Dorsolateral prefrontal cortex (tissue), 120 donors: ENCODE measurements at regions of chr1 and their contacts with region 1.

Region 1: GRCh38 chr1:24744911-24745710 is at the start of gene CLIC4:
- DNase-seq: peak; percentile 64 to 99 (median 98)
- H3K4me3 ChIP-seq: peak within 1 kb of the TSS; percentile 37 to 96 (median 80)
- H3K27ac ChIP-seq: peak within 1 kb of the TSS; percentile 33 to 99 (median 93)
- H3K27me3 ChIP-seq: peaks cover 0 to 33% (median 0%) of the 10 kb centered on the region in 45 donors
- CTCF ChIP-seq: peak; percentile 27 to 81 (median 66)
- total RNA-seq, gene CLIC4: 39.8 to 251 (median 85.5) TPM

Region 2: GRCh38 chr1:24688621-24689195 is 56.4 kb before region 1 on chr1:
- intact Hi-C with region 1: loop called (anchors 2 kb)
- DNase-seq: peak; percentile 13 to 83 (median 74)
- H3K4me3 ChIP-seq: peak overlapping the region in 1 of 59 donors; percentile 4
- H3K27ac ChIP-seq: peak overlapping the region in 34 of 59 donors; percentile 4 to 80 (median 50)
- H3K27me3 ChIP-seq: no peaks in the 10 kb centered on the region
- CTCF ChIP-seq: peak; percentile 55 to 98 (median 88)

Region 3: DNA sequence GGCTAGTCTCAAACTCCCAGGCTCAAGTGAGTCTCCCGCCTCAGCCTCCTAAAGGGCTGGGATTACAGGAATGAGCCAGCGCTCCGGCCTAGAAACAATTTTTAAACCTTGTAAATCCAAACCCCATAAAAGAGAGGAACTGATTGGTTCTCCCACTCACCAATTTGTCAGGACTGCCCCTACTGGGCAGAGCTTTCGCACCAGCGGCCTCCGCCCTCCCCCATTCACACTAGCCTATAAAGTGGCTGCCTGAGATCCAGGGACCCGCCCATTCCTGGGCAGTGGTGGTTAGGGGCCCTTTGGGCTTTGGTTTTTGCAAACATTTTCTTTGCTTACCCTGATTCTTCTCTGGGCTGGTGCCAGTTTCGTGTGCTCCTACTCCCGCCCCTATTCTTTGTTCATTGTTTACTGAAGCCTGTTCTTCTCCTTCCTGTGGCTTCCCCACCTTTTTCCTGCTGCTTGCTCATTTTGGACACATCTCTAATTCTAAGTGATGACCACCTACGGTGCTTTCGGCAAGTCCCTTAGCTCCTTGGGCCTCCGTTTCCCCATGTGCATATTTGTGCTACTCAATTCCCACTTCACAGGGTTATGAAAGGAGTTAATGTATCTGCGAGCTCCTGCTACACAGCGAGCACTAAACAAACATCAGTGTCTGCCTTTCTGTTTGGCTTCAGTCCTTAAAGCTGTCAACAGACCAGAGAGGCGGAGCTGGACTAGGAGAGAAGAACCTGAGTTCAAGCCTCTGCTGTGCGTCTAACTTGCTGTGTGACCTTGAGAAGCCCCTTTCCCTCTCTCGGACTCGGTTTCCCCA is 39.6 kb before region 1 on chr1:
- intact Hi-C with region 1: loop called (anchors 1 kb)
- DNase-seq: peak; percentile 11 to 91 (median 86)
- H3K4me3 ChIP-seq: peak overlapping the region in 53 of 59 donors; percentile 7 to 61 (median 32)
- H3K27ac ChIP-seq: peak overlapping the region; percentile 67 to 98 (median 93)
- H3K27me3 ChIP-seq: no peaks in the 10 kb centered on the region
- CTCF ChIP-seq: peak in 39 of 56 donors; percentile 10 to 52 (median 36)

Region 4: GRCh38 chr1:24714859-24715520 is 30.1 kb before region 1 on chr1:
- intact Hi-C with region 1: loop called (anchors 1 to 2 kb)
- DNase-seq: peak; percentile 20 to 92 (median 88)
- H3K4me3 ChIP-seq: peak overlapping the region in 15 of 59 donors; percentile 9 to 44 (median 23)
- H3K27ac ChIP-seq: peak overlapping the region; percentile 58 to 98 (median 93)
- H3K27me3 ChIP-seq: no peaks in the 10 kb centered on the region
- CTCF ChIP-seq: peak in 13 of 56 donors; percentile 4 to 38 (median 14)

Region 5: DNA sequence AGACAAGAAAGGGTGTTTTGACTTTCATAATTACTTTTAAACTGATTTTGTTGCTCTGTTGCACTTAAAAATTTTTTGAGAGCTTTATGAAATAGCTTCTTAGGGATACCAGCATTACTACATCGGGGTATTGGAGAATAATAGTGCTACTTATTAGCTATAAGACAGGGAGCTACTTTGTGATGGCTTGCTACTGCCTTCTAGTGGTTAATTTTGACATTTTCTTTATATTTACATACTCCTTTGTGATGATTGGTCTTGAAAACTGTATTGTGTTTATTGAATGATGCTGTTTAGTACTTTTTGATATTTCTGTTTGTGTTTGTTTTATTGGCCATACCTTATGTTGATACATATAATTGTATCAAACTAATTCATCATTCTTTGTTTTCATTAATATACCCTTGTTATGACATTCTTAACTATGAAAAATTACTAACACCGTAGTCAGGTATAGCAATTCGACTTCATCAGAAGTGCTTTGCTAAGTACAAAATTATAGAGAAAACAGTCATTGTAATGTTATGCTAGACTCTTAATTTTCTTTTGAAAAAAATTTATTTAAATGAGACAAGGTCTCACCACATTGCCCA is 85.7 kb after region 1 on chr1:
- intact Hi-C with region 1: loop called (anchors 2 kb)
- DNase-seq: no peak
- H3K4me3 ChIP-seq: peak overlapping the region in 4 of 59 donors; percentile 4 to 40 (median 27)
- H3K27ac ChIP-seq: peak overlapping the region in 37 of 59 donors; percentile 5 to 75 (median 48)
- H3K27me3 ChIP-seq: no peaks in the 10 kb centered on the region
- CTCF ChIP-seq: peak; percentile 73 to 95 (median 85)

Region 6: DNA sequence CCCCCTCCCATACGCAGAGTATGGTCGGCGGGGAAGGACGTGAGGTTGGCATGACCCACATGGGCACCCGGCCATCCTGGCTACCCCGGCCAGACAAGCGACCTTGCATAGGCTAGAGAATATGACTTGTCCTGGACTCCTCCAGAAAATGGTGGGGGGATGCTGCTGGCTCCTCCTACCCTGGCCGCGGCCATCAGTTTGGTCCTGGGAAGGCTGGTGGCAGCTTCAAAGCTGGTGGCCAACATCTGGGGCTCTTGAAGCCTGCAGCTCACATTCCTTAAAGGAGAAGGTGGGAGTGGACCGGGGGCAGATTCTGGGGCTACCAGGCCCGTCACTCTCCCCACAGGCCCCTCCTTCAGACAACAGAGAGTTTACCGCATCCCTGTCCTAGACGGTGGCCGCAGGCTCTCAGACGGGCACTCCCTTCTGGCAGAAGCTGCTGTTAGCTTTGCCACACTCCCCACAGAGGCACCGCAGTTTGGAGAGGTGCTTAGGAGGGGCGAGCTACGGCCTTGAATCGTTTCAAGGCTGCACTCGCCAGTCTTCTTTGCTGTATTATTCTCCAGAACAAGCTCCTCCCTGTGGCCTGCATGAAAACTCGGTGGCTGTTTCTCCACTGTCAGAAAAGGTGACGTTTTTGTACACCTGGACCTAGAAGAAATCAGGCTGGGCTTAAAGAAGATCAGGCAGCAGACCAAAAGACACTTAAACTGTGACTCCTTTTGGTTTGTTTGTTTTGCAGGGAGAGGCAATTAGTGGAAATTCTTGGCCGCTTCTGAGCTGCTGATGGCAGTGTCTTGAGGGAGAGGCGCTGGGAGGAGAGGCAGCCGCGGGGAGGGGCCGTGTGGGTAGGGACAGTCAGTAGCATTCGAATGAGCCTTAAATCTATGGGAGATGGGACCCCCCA is 117.0 kb after region 1 on chr1:
- intact Hi-C with region 1: no loop called
- DNase-seq: no peak
- H3K4me3 ChIP-seq: no peak overlapping the region
- H3K27ac ChIP-seq: no peak overlapping the region
- H3K27me3 ChIP-seq: peaks cover 0 to 26% (median 0%) of the 10 kb centered on the region in 45 donors
- CTCF ChIP-seq: no peak

Region 7: DNA sequence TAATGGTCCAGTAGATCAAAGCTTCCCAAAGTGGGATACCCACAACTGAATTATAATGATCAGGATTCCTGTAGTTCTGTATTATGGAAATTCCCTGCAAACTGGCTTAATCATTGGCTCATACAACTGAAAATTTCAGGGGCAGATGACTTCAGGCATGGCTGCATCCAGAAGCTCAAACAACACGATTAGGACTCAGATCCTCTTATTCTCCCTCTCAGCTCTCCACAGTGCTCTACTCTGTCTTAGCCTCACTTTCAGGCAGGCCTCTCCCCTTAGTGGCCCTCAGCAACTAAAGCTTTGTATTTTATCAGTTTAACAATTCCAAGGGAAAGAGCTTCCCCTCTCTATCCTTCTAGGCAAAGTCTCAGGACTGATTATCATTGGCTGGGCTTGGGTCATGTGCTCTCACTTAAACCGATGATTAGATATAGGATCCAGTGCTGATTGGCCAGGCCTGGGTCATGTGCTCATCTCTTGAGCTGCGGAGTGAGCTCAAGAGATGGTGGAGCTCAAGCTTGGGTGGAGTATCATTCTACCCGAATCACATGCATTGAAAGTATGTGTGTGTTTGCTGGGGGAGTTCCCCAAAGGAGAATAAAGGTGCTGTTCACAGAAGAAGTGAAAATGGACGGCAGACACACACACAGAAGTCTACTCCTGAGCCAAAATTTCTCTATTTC is 242.9 kb after region 1 on chr1:
- intact Hi-C with region 1: no loop called
- DNase-seq: no peak
- H3K4me3 ChIP-seq: no peak overlapping the region
- H3K27ac ChIP-seq: no peak overlapping the region
- H3K27me3 ChIP-seq: peaks cover 0 to 6% (median 0%) of the 10 kb centered on the region in 45 donors
- CTCF ChIP-seq: no peak